ENCODE measurements at regions of chr6 and their contacts with region 1.

Region 1: GRCh38 chr6:127924440-127924839 is 23.6 kb upstream of the THEMIS start:
- DNase-seq: peak; percentile 40
- H3K4me3 Mint-ChIP-seq: peak overlapping the region; percentile 5
- H3K27ac Mint-ChIP-seq: peak overlapping the region; percentile 61
- H3K4me1 Mint-ChIP-seq: peaks cover 59% of the 10 kb centered on the region
- H3K27me3 Mint-ChIP-seq: no peaks in the 10 kb centered on the region

Region 2: DNA sequence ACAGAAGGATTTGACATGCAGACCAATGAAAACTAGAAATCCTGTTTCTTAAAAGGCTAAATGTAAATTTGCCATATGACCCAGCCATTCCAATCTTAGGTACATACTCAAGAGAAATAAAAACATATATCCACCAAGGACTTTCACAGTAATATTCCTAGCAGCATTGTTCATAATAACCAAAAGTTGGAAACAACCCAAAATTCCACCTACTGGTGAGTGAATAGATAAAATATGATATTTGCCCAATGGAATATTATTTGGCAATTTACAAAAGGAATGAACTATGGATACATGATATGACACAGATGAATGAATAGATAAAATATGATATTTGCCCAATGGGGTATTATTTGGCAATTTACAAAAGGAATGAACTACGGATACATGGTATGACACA is 428.0 kb before region 1 on chr6:
- CTCF ChIA-PET with region 1: no interaction called
- intact Hi-C with region 1: no loop called
- DNase-seq: no peak
- H3K4me3 Mint-ChIP-seq: no peak overlapping the region
- H3K27ac Mint-ChIP-seq: no peak overlapping the region
- H3K4me1 Mint-ChIP-seq: no peaks in the 10 kb centered on the region
- H3K27me3 Mint-ChIP-seq: no peaks in the 10 kb centered on the region

Region 3: DNA sequence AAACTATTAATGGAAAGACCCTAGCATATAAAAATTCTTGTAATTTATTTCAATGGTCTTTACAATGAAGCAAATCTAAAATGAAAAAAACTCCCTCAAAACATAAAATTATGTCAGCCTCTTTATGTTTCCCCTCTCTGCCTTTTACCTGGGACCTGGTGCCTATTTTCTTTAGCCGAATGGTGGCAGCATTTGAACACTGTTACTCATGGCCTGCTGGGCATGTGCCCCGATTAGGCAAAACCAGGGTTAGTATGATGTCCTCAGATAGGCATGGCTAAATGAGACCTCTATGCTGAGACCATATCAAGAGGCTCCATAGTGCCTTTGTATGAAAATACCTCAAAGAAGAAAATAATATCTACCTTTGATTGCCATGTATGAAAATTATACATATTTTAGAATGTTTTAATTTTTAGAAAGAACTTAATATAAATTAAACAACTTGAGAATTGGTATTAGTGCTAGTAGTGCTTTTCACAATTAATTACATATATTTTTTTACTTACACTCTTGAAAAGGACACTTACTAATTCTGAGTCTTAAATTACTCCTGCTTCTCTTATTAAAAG is 369.9 kb before region 1 on chr6:
- CTCF ChIA-PET with region 1: no interaction called
- intact Hi-C with region 1: no loop called
- DNase-seq: peak; percentile 57
- H3K4me3 Mint-ChIP-seq: no peak overlapping the region
- H3K27ac Mint-ChIP-seq: no peak overlapping the region
- H3K4me1 Mint-ChIP-seq: no peaks in the 10 kb centered on the region
- H3K27me3 Mint-ChIP-seq: peaks cover 14% of the 10 kb centered on the region

Region 4: DNA sequence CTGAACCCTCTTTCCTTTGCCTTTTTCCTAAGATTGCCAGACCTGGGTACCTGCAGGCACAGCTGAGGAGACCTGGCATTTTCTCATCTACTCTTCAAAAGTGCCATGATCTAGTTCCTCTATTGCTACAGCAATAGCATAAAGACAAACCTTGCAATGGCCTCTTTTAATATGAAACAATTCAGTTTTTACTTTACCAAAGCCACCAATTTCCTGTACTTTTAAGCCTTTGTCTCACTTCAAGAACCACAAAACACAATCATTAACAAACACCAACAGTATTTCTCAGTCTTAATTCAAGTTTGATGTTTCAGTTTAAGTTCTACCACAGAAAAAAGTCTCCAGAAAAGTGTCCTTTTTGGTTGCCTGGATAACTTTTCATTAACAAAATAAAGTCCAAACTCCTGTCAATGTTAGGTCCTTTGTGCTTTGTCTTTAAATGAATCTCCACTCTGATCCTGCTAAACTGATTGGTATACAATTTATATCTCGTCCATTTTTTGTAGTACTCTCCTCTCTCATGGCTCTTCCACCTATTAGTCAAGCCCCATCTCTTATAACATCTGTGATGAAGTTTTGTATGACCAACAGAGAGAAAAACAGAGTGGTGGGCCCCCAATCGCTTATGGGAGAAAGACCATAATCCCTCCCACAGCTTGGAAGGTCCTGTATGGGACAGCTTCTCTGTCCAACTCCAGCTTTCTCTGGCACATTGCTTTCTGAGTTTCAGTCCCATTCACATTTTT is 26.9 kb after region 1 on chr6:
- CTCF ChIA-PET with region 1: no interaction called
- intact Hi-C with region 1: loop called (anchors 2 kb)
- DNase-seq: no peak
- H3K4me3 Mint-ChIP-seq: peak overlapping the region; percentile 37
- H3K27ac Mint-ChIP-seq: peak overlapping the region; percentile 66
- H3K4me1 Mint-ChIP-seq: peaks cover 62% of the 10 kb centered on the region
- H3K27me3 Mint-ChIP-seq: no peaks in the 10 kb centered on the region

Measured in activated naive CD4-positive, alpha-beta T cell treated with anti-CD3 and anti-CD28 coated beads for 36 hours (primary cell).